ENCODE measurements at regions of chr6 and their contacts with region 1.

Region 1: GRCh38 chr6:169404828-169405227 is 151.2 kb upstream of the THBS2 start:
- DNase-seq: no peak
- H3K4me3 ChIP-seq: no peak overlapping the region
- H3K27ac ChIP-seq: no peak overlapping the region
- H3K4me1 ChIP-seq: peaks cover 4% of the 10 kb centered on the region
- H3K27me3 ChIP-seq: no peaks in the 10 kb centered on the region
- CTCF ChIP-seq: no peak

Region 2: DNA sequence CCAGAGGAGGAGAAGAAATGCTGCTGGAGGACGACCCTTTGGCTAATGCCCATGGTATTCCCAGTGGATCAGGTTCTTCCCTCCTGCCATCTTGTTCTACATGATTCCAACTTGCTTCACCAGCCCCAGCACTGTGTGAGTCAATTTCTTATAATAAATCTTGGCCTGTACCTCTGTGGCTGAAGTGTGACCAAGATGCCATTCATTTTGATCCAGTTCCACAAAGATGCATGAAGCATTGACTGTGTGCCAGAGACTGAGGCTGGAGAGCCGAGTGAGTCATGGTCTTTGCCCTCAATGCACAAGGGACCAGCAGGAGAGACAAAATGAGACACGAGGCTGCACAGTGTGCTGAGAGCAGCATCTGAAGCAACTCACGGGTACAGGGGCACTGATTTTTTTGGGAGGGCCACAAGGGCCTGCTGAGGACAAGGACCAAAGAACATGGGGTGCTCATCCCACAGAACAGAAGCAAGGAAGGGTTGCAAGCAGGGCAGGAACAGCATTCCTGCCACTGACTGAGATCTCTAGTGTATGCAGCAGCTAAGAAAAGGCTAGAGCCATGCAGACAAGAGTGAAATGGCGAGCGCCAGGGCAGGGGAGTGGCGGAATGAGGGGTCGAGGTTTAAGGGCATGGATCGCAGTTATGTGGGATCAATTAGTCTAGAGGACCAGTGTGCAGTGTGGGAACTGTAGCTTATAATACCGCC is 358.2 kb before region 1 on chr6:
- CTCF ChIA-PET with region 1: no interaction called
- dilution Hi-C with region 1: no loop called
- in situ Hi-C with region 1: no loop called
- intact Hi-C with region 1: no loop called
- DNase-seq: peak; percentile 43
- H3K4me3 ChIP-seq: no peak overlapping the region
- H3K27ac ChIP-seq: no peak overlapping the region
- H3K4me1 ChIP-seq: peaks cover 2% of the 10 kb centered on the region
- H3K27me3 ChIP-seq: no peaks in the 10 kb centered on the region
- CTCF ChIP-seq: no peak

Region 3: DNA sequence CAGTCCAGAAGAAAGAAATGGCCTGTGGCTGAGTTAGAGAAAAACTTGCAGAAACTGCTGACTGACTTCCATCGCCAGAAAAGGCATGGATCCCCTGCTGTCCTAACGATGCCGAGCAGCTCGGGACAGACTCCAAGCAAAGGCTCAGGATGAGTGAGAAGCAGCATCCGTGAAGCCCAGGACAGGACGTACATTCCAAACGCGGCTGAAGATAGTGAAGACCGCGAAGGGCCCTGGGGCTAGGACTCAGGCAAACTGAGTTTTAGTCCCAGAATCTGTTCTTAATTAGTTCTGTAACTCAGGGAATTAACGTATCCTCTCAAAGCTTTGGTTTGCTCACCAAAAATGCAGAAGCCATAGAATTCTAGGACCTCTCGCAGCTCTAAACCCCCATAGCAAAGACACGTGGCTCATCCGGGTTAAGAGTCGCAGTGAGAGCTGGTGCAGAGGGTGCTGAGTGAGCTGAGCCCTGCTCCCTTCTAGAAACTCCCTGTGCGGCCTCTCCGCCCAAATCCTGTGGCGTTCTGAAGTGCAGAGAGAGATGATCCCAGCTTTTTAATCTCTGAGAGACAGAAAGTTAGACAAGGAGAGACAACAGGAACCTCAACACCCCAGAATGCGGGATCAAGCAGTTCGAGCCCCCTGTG is 18.3 kb before region 1 on chr6:
- CTCF ChIA-PET with region 1: no interaction called
- dilution Hi-C with region 1: no loop called
- in situ Hi-C with region 1: no loop called
- intact Hi-C with region 1: no loop called
- DNase-seq: no peak
- H3K4me3 ChIP-seq: no peak overlapping the region
- H3K27ac ChIP-seq: no peak overlapping the region
- H3K4me1 ChIP-seq: no peaks in the 10 kb centered on the region
- H3K27me3 ChIP-seq: no peaks in the 10 kb centered on the region
- CTCF ChIP-seq: no peak

Region 4: GRCh38 chr6:169427856-169428255 is 23.0 kb after region 1 on chr6:
- CTCF ChIA-PET with region 1: no interaction called
- dilution Hi-C with region 1: no loop called
- in situ Hi-C with region 1: no loop called
- intact Hi-C with region 1: no loop called
- DNase-seq: no peak
- H3K4me3 ChIP-seq: no peak overlapping the region
- H3K27ac ChIP-seq: no peak overlapping the region
- H3K4me1 ChIP-seq: no peaks in the 10 kb centered on the region
- H3K27me3 ChIP-seq: no peaks in the 10 kb centered on the region
- CTCF ChIP-seq: no peak

Region 5: GRCh38 chr6:169452117-169452868 is 47.5 kb after region 1 on chr6:
- CTCF ChIA-PET with region 1: no interaction called
- dilution Hi-C with region 1: loop called (anchors 5 kb)
- in situ Hi-C with region 1: no loop called
- intact Hi-C with region 1: no loop called
- DNase-seq: peak; percentile 78
- H3K4me3 ChIP-seq: peak overlapping the region; percentile 8 to 32 (median 23)
- H3K27ac ChIP-seq: peak overlapping the region; percentile 46
- H3K4me1 ChIP-seq: peaks cover 11% of the 10 kb centered on the region
- H3K27me3 ChIP-seq: no peaks in the 10 kb centered on the region
- CTCF ChIP-seq: no peak